GM23248 (cell line): ENCODE measurements at regions of chrX and their contacts with region 1.

Region 1: DNA sequence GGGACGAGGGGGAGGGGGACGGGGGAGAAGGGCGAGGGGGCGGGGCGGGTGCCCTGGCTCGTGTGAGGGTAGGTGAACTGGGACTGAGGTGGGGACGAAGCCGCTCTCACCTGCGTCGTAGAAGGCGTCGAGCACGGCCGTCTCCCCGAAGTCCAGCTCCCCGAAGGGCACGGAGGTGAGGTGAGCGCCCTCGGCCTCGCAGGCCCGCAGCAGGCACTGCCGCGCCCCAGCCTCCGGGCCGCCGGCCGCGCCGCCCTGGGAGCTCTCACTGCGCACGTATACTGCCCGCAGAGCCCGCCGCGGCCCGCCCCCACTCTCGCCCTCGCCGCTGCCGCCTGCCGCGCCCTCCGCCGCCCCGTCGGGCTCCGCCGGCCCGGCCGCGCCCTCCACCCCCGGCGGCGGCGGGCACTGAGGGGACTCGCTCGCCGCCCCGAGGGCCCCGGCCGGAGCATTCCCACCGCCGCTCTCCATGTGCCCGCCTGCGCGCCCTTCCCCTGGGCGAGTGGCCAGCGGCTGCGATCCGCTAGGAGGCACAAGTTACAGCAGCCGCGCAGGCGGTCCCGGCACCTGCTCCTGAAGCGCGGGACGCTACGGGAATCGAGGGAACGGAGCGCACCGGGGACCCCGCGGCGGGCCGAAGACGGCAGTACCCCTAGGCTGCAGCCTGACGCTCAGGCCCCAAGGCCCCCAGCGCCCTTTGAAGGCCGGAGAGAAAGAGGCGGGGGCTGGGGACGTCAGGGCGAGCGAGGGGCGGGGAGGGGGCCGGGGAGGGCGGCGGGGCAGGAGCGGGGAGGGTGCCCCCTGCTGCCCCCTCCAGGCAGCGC is at the start of gene MAP3K15:
- DNase-seq: peak; percentile 35
- H3K4me3 ChIP-seq: no peak within 1 kb of the TSS; the same call in 1 of the 2 replicates
- H3K27ac ChIP-seq: no peak within 1 kb of the TSS
- H3K4me1 ChIP-seq: no peaks in the 10 kb centered on the region
- H3K27me3 ChIP-seq: peaks cover 7% of the 10 kb centered on the region; the same call in 1 of the 2 replicates
- total RNA-seq, gene MAP3K15: not detected in 2 replicates

Region 2: GRCh38 chrX:19162851-19163250 is 352.2 kb before region 1 on chrX:
- in situ Hi-C with region 1: no loop called
- DNase-seq: no peak
- H3K4me3 ChIP-seq: no peak overlapping the region
- H3K27ac ChIP-seq: no peak overlapping the region
- H3K4me1 ChIP-seq: no peaks in the 10 kb centered on the region
- H3K27me3 ChIP-seq: no peaks in the 10 kb centered on the region

Region 3: GRCh38 chrX:19382555-19383145 is 132.4 kb before region 1 on chrX:
- in situ Hi-C with region 1: loop called (anchors 25 kb)
- DNase-seq: peak; percentile 42
- H3K4me3 ChIP-seq: no peak overlapping the region
- H3K27ac ChIP-seq: no peak overlapping the region
- H3K4me1 ChIP-seq: no peaks in the 10 kb centered on the region
- H3K27me3 ChIP-seq: no peaks in the 10 kb centered on the region